ENCODE measurements at regions of chr1 and their contacts with region 1.

Region 1: GRCh38 chr1:118225471-118225870 is 40.4 kb upstream of the SPAG17 start:
- DNase-seq: no peak
- H3K4me3 ChIP-seq: no peak overlapping the region
- H3K27ac ChIP-seq: no peak overlapping the region
- H3K4me1 ChIP-seq: no peaks in the 10 kb centered on the region
- H3K27me3 ChIP-seq: no peaks in the 10 kb centered on the region
- CTCF ChIP-seq: no peak
- POLR2A ChIP-seq: no peak

Region 2: GRCh38 chr1:118093017-118093416 is 132.5 kb before region 1 on chr1:
- intact Hi-C with region 1: no loop called
- DNase-seq: no peak
- H3K4me3 ChIP-seq: no peak overlapping the region
- H3K27ac ChIP-seq: no peak overlapping the region
- H3K4me1 ChIP-seq: no peaks in the 10 kb centered on the region
- H3K27me3 ChIP-seq: no peaks in the 10 kb centered on the region
- CTCF ChIP-seq: no peak
- POLR2A ChIP-seq: no peak

Region 3: DNA sequence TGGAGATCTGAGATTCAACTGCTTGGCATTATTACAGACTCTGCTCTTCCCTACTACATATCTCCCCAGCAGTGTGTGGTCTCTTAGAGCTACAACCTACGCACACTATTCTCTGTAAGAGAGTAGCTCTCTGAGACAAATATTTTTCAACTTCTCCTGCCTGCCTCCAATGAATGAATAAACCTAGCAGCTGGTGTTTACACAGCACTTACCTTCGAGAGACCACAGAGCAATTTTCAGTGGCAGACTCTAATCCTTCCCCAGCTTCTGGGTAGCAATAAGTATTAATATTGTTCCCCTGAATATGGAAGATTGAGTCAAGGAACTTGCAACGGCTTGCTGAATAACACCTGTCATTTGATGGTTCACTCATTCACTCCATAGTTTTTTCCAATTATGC is 310.4 kb after region 1 on chr1:
- intact Hi-C with region 1: no loop called
- DNase-seq: no peak
- H3K4me3 ChIP-seq: no peak overlapping the region
- H3K27ac ChIP-seq: no peak overlapping the region
- H3K4me1 ChIP-seq: no peaks in the 10 kb centered on the region
- H3K27me3 ChIP-seq: no peaks in the 10 kb centered on the region
- CTCF ChIP-seq: no peak
- POLR2A ChIP-seq: no peak

Region 4: GRCh38 chr1:119225831-119226230 is 1000.4 kb after region 1 on chr1:
- intact Hi-C with region 1: loop called (anchors 5 kb)
- DNase-seq: no peak
- H3K4me3 ChIP-seq: no peak overlapping the region
- H3K27ac ChIP-seq: no peak overlapping the region
- H3K4me1 ChIP-seq: peaks cover 5% of the 10 kb centered on the region
- H3K27me3 ChIP-seq: no peaks in the 10 kb centered on the region
- CTCF ChIP-seq: no peak
- POLR2A ChIP-seq: no peak

Measured in vagina (tissue), 2 donors.